ENCODE measurements at regions of chr21 and their contacts with region 1.

Region 1: GRCh38 chr21:21232320-21232719 is 234.1 kb downstream of the NCAM2 start:
- DNase-seq: peak; percentile 71
- ATAC-seq: peak; percentile 68
- H3K4me3 ChIP-seq: no peak overlapping the region
- H3K27ac ChIP-seq: no peak overlapping the region
- H3K4me1 ChIP-seq: no peaks in the 10 kb centered on the region
- H3K27me3 ChIP-seq: no peaks in the 10 kb centered on the region
- CTCF ChIP-seq: peak; percentile 79
- POLR2A ChIP-seq: no peak
- RAD21 ChIP-seq: peak; percentile 91

Region 2: GRCh38 chr21:20999659-21000058 is 232.7 kb before region 1 on chr21:
- CTCF ChIA-PET with region 1: interaction called, 3 read pairs
- POLR2A ChIA-PET with region 1: no interaction called
- dilution Hi-C with region 1: no loop called
- in situ Hi-C with region 1: no loop called
- intact Hi-C with region 1: loop called (anchors 2 kb)
- DNase-seq: peak; percentile 49
- ATAC-seq: peak; percentile 55
- H3K4me3 ChIP-seq: no peak overlapping the region
- H3K27ac ChIP-seq: no peak overlapping the region
- H3K4me1 ChIP-seq: no peaks in the 10 kb centered on the region
- H3K27me3 ChIP-seq: peaks cover 6% of the 10 kb centered on the region; the same call in 1 of the 2 replicates
- CTCF ChIP-seq: peak; percentile 89
- POLR2A ChIP-seq: no peak
- RAD21 ChIP-seq: peak; percentile 89

Region 3: GRCh38 chr21:21187579-21187978 is 44.7 kb before region 1 on chr21:
- CTCF ChIA-PET with region 1: no interaction called
- POLR2A ChIA-PET with region 1: no interaction called
- dilution Hi-C with region 1: no loop called
- in situ Hi-C with region 1: no loop called
- intact Hi-C with region 1: loop called (anchors 1 kb)
- DNase-seq: peak; percentile 59
- ATAC-seq: peak; percentile 73
- H3K4me3 ChIP-seq: no peak overlapping the region
- H3K27ac ChIP-seq: no peak overlapping the region; the same call in 1 of the 2 replicates
- H3K4me1 ChIP-seq: peaks cover 3% of the 10 kb centered on the region; the same call in 1 of the 2 replicates
- H3K27me3 ChIP-seq: no peaks in the 10 kb centered on the region
- CTCF ChIP-seq: no peak
- POLR2A ChIP-seq: no peak
- RAD21 ChIP-seq: no peak

Region 4: GRCh38 chr21:21210552-21210951 is 21.8 kb before region 1 on chr21:
- CTCF ChIA-PET with region 1: no interaction called
- POLR2A ChIA-PET with region 1: no interaction called
- dilution Hi-C with region 1: no loop called
- in situ Hi-C with region 1: no loop called
- intact Hi-C with region 1: no loop called
- DNase-seq: no peak
- ATAC-seq: no peak
- H3K4me3 ChIP-seq: no peak overlapping the region
- H3K27ac ChIP-seq: no peak overlapping the region
- H3K4me1 ChIP-seq: no peaks in the 10 kb centered on the region
- H3K27me3 ChIP-seq: no peaks in the 10 kb centered on the region
- CTCF ChIP-seq: no peak
- POLR2A ChIP-seq: no peak
- RAD21 ChIP-seq: no peak

Region 5: DNA sequence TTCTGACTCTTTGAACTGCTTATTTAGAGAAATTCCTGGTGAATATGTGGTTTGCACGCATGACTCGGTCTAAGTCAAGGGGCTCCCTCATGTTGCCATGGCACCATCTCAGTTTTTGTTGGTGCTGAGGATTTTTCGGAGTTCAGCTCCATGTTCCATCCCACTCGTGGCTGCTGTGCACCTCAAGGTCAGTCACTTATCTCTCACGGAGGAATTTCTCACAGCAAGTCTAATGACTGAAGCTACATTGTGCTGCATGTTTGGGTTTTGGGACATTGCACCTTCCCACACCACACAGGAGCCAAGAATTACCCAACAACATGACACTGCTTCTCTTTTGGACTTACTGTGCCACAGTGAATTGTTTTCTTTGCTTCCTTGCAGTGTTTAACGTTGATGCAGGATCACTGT is 35.7 kb after region 1 on chr21:
- CTCF ChIA-PET with region 1: no interaction called
- POLR2A ChIA-PET with region 1: no interaction called
- dilution Hi-C with region 1: no loop called
- in situ Hi-C with region 1: no loop called
- intact Hi-C with region 1: no loop called
- DNase-seq: peak; percentile 4
- ATAC-seq: no peak
- H3K4me3 ChIP-seq: no peak overlapping the region
- H3K27ac ChIP-seq: no peak overlapping the region
- H3K4me1 ChIP-seq: no peaks in the 10 kb centered on the region
- H3K27me3 ChIP-seq: no peaks in the 10 kb centered on the region
- CTCF ChIP-seq: no peak
- POLR2A ChIP-seq: no peak
- RAD21 ChIP-seq: no peak

Region 6: GRCh38 chr21:21324297-21324696 is 92.0 kb after region 1 on chr21:
- CTCF ChIA-PET with region 1: no interaction called
- POLR2A ChIA-PET with region 1: no interaction called
- dilution Hi-C with region 1: no loop called
- in situ Hi-C with region 1: no loop called
- intact Hi-C with region 1: no loop called
- DNase-seq: no peak
- ATAC-seq: no peak
- H3K4me3 ChIP-seq: no peak overlapping the region
- H3K27ac ChIP-seq: no peak overlapping the region
- H3K4me1 ChIP-seq: no peaks in the 10 kb centered on the region
- H3K27me3 ChIP-seq: no peaks in the 10 kb centered on the region
- CTCF ChIP-seq: no peak
- POLR2A ChIP-seq: no peak
- RAD21 ChIP-seq: no peak

Region 7: GRCh38 chr21:21612466-21612865 is 380.1 kb after region 1 on chr21:
- CTCF ChIA-PET with region 1: no interaction called
- POLR2A ChIA-PET with region 1: no interaction called
- dilution Hi-C with region 1: no loop called
- in situ Hi-C with region 1: no loop called
- intact Hi-C with region 1: loop called (anchors 10 kb)
- DNase-seq: peak; percentile 92
- ATAC-seq: peak; percentile 97
- H3K4me3 ChIP-seq: no peak overlapping the region; the same call in 1 of the 2 replicates
- H3K27ac ChIP-seq: no peak overlapping the region
- H3K4me1 ChIP-seq: no peaks in the 10 kb centered on the region
- H3K27me3 ChIP-seq: no peaks in the 10 kb centered on the region
- CTCF ChIP-seq: no peak
- POLR2A ChIP-seq: no peak
- RAD21 ChIP-seq: no peak

Region 8: GRCh38 chr21:21915816-21916215 is 683.5 kb after region 1 on chr21:
- CTCF ChIA-PET with region 1: no interaction called
- POLR2A ChIA-PET with region 1: no interaction called
- dilution Hi-C with region 1: no loop called
- in situ Hi-C with region 1: loop called (anchors 10 kb)
- intact Hi-C with region 1: loop called (anchors 1 kb)
- DNase-seq: no peak
- ATAC-seq: no peak
- H3K4me3 ChIP-seq: no peak overlapping the region
- H3K27ac ChIP-seq: no peak overlapping the region
- H3K4me1 ChIP-seq: no peaks in the 10 kb centered on the region
- H3K27me3 ChIP-seq: no peaks in the 10 kb centered on the region
- CTCF ChIP-seq: no peak
- POLR2A ChIP-seq: no peak
- RAD21 ChIP-seq: no peak

Region 9: GRCh38 chr21:22791986-22792560 is 1559.8 kb after region 1 on chr21:
- CTCF ChIA-PET with region 1: no interaction called
- POLR2A ChIA-PET with region 1: no interaction called
- dilution Hi-C with region 1: no loop called
- in situ Hi-C with region 1: loop called (anchors 25 kb)
- intact Hi-C with region 1: loop called (anchors 2 kb)
- DNase-seq: peak; percentile 38
- ATAC-seq: no peak; the same call in 1 of the 2 replicates
- H3K4me3 ChIP-seq: no peak overlapping the region
- H3K27ac ChIP-seq: no peak overlapping the region
- H3K4me1 ChIP-seq: no peaks in the 10 kb centered on the region
- H3K27me3 ChIP-seq: no peaks in the 10 kb centered on the region
- CTCF ChIP-seq: peak; percentile 65
- POLR2A ChIP-seq: no peak
- RAD21 ChIP-seq: peak; percentile 55

Measured in IMR-90 (cell line).